CD4-positive, alpha-beta memory T cell (primary cell): ENCODE measurements at regions of chr6 and their contacts with region 1.

Region 1: GRCh38 chr6:109009236-109009961 is 85.2 kb downstream of the SESN1 start:
- DNase-seq: peak; percentile 90 to 92 (median 90)
- H3K4me3 ChIP-seq: peak overlapping the region; percentile 77 to 86
- H3K4me3 Mint-ChIP-seq: peak overlapping the region; percentile 94 to 100 (median 98)
- H3K27ac ChIP-seq: peak overlapping the region; percentile 96
- H3K27ac Mint-ChIP-seq: peak overlapping the region; percentile 94 to 100 (median 100)
- H3K4me1 ChIP-seq: peaks cover 67% of the 10 kb centered on the region
- H3K4me1 Mint-ChIP-seq: peaks cover 47 to 81% (median 60%) of the 10 kb centered on the region in 4 donors
- H3K27me3 ChIP-seq: no peaks in the 10 kb centered on the region
- H3K27me3 Mint-ChIP-seq: no peaks in the 10 kb centered on the region

Region 2: GRCh38 chr6:107957909-107958688 is 1051.3 kb before region 1 on chr6 and contains the start of gene SEC63:
- CTCF ChIA-PET with region 1: no interaction called
- POLR2A ChIA-PET with region 1: no interaction called
- intact Hi-C with region 1: loop called (anchors 10 kb)
- DNase-seq: peak; percentile 95 to 96 (median 96)
- H3K4me3 ChIP-seq: peak within 1 kb of the TSS; percentile 55 to 80
- H3K4me3 Mint-ChIP-seq: peak within 1 kb of the TSS; percentile 92 to 100 (median 98)
- H3K27ac ChIP-seq: peak within 1 kb of the TSS; percentile 86
- H3K27ac Mint-ChIP-seq: peak within 1 kb of the TSS; percentile 92 to 98 (median 97)
- H3K4me1 ChIP-seq: peaks cover 29% of the 10 kb centered on the region
- H3K4me1 Mint-ChIP-seq: peaks cover 18 to 39% (median 29%) of the 10 kb centered on the region in 4 donors
- H3K27me3 ChIP-seq: no peaks in the 10 kb centered on the region
- H3K27me3 Mint-ChIP-seq: no peaks in the 10 kb centered on the region
- total RNA-seq, gene SEC63: 91.7 to 95.5 TPM

Region 3: DNA sequence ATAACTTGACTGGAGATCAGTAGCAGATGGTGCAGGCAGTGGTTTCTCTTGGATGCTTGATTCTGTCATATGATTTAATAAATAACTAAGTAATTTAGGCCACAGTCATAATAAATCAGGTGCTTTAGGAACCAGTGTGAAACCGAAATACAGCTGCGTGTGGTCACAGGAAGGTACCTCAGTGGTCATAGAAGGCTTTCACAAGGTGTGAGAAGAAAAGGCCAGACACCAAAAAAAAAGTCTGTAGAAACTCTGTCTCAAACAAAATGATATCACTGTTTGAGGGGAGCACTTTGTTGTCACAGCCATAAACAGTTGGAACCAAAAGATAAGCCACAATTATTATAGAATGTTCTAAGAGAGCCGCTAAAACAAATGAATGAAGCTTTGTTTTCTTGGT is 104.7 kb before region 1 on chr6:
- CTCF ChIA-PET with region 1: no interaction called
- POLR2A ChIA-PET with region 1: interaction called, 4 read pairs
- intact Hi-C with region 1: loop called (anchors 5 kb)
- DNase-seq: no peak
- H3K4me3 ChIP-seq: no peak overlapping the region
- H3K4me3 Mint-ChIP-seq: no peak overlapping the region
- H3K27ac ChIP-seq: no peak overlapping the region
- H3K27ac Mint-ChIP-seq: peak overlapping the region in 2 of 7 donors; percentile 6 to 90
- H3K4me1 ChIP-seq: peaks cover 26% of the 10 kb centered on the region
- H3K4me1 Mint-ChIP-seq: peaks cover 22 to 35% (median 27%) of the 10 kb centered on the region in 4 donors
- H3K27me3 ChIP-seq: no peaks in the 10 kb centered on the region
- H3K27me3 Mint-ChIP-seq: no peaks in the 10 kb centered on the region

Region 4: GRCh38 chr6:108995309-108995708 is 14.1 kb before region 1 on chr6:
- CTCF ChIA-PET with region 1: interaction called, 4 read pairs
- POLR2A ChIA-PET with region 1: interaction called, 12 read pairs
- intact Hi-C with region 1: no loop called
- DNase-seq: no peak
- H3K4me3 ChIP-seq: no peak overlapping the region
- H3K4me3 Mint-ChIP-seq: no peak overlapping the region
- H3K27ac ChIP-seq: no peak overlapping the region
- H3K27ac Mint-ChIP-seq: no peak overlapping the region
- H3K4me1 ChIP-seq: no peaks in the 10 kb centered on the region
- H3K4me1 Mint-ChIP-seq: peaks cover 0 to 9% (median 3%) of the 10 kb centered on the region in 4 donors
- H3K27me3 ChIP-seq: no peaks in the 10 kb centered on the region
- H3K27me3 Mint-ChIP-seq: no peaks in the 10 kb centered on the region

Region 5: DNA sequence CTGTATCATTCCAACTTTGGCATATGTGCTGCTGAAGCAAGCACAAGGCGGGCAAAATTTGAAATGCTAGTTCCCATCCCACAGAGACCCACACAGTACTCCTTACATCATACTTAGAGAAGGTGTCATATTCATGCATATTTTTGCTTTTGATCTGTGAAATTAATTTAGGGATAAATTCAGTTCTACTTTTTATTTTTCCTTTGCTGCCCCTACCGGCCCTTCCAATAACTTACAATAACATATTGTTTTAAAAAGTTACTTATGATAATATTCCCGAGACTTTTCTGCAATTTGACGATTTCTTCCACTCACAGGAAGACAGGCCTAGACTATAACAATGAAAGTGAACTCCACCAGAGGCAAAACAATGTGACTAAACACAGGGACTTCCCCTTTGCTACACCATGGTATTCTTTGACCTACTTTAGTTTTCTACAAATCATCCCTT is 50.2 kb after region 1 on chr6:
- CTCF ChIA-PET with region 1: interaction called, 3 read pairs
- POLR2A ChIA-PET with region 1: interaction called, 32 read pairs
- intact Hi-C with region 1: loop called (anchors 1 kb)
- DNase-seq: peak; percentile 52 to 65 (median 58)
- H3K4me3 ChIP-seq: no peak overlapping the region
- H3K4me3 Mint-ChIP-seq: peak overlapping the region in 7 of 8 donors; percentile 35 to 78 (median 61)
- H3K27ac ChIP-seq: peak overlapping the region; percentile 52
- H3K27ac Mint-ChIP-seq: peak overlapping the region; percentile 71 to 95 (median 92)
- H3K4me1 ChIP-seq: peaks cover 36% of the 10 kb centered on the region
- H3K4me1 Mint-ChIP-seq: peaks cover 31 to 59% (median 39%) of the 10 kb centered on the region in 4 donors
- H3K27me3 ChIP-seq: no peaks in the 10 kb centered on the region
- H3K27me3 Mint-ChIP-seq: no peaks in the 10 kb centered on the region